ENCODE measurements at regions of chr15 and their contacts with region 1.

Region 1: DNA sequence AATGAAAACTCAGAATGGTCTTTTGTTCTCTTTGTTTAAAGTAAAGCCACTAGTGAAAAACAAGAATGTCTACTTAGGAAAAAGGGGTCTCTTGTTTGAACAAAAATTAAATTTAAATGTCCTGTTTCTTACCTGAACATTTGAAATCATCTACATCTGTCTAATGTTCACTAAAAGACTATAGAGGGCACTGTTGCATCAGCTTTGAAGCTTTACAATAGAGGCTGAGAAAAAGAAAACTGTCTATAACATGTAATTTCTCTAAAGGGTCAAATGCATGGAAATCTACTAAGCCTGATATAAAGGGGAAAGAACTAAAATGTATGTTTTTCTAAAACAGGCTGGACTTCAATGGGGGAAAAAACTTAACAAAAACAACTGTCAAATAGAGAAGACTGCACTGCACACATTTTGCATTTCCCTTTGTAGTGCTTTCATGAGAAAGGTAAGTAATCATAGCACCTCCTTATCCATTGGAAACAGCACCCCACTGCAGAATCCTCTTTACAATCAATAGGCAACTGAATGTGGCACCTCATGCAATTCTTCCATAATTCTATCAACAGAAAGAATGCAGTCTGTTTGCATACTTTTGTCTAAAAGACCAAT is 26.3 kb downstream of the DPH6 start:
- DNase-seq: no peak
- H3K4me3 ChIP-seq: no peak overlapping the region
- H3K27ac ChIP-seq: no peak overlapping the region
- H3K4me1 ChIP-seq: peaks cover 0 to 22% (median 6%) of the 10 kb centered on the region in 6 donors
- H3K27me3 ChIP-seq: no peaks in the 10 kb centered on the region
- CTCF ChIP-seq: peak; percentile 21 to 67 (median 56)
- POLR2A ChIP-seq: no peak

Region 2: GRCh38 chr15:35680951-35681350 is 161.3 kb after region 1 on chr15:
- intact Hi-C with region 1: loop called (anchors 10 kb)
- DNase-seq: no peak
- H3K4me3 ChIP-seq: no peak overlapping the region
- H3K27ac ChIP-seq: no peak overlapping the region
- H3K4me1 ChIP-seq: peaks cover 0 to 4% (median 0%) of the 10 kb centered on the region in 6 donors
- H3K27me3 ChIP-seq: no peaks in the 10 kb centered on the region
- CTCF ChIP-seq: no peak
- POLR2A ChIP-seq: no peak

Region 3: DNA sequence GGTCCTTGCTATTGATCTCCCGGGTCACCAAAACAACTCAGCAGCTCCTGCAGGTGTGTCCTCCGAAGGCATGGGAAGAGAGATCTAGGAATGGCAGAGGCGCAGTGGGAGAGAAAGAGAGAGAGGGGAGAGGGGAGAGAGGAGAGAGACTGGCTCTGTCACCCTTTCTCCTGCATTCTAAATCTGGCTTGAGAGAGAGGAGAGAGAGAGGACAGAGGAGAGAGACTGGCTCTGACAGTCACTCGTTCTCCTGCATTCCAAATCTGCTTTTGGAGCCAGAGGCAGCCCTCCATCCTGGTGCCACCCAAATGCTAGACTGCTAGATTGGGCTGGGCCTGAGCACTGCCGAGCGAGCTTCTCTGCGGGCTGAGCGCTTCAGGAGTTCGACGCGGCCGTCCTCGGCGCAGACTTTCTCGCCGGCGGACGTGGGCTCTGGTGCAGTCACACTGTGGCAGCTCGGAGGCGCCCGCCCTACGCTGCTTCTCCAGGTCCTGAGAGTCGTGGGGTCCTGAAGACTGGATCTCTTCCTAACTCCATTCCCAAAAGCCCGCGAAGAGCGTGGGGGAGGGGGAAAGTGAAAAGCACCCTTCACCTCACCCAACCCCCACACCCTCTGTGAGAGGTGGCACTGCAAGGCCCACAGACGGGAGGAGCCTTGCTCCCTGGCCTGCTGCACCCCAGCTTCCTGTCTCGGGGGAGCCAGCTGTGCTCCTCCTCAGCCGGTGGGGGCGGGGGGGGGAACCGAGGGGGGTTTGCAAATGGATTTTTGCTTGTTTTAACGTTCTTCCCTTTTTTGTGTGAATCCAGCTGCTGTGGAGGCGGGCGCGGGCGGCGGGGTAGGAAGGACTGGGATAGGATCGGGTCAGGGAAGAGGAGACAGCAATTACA is 1358.4 kb after region 1 on chr15:
- intact Hi-C with region 1: loop called (anchors 10 kb)
- DNase-seq: no peak
- H3K4me3 ChIP-seq: peak overlapping the region in 3 of 8 donors; percentile 3 to 37 (median 21)
- H3K27ac ChIP-seq: no peak overlapping the region
- H3K4me1 ChIP-seq: peaks cover 0 to 24% (median 7%) of the 10 kb centered on the region in 6 donors
- H3K27me3 ChIP-seq: peaks cover 8 to 83% (median 59%) of the 10 kb centered on the region in 7 donors
- CTCF ChIP-seq: no peak
- POLR2A ChIP-seq: no peak

Measured in spleen (tissue), 13 donors.